Ascending aorta (tissue), 2 donors: ENCODE measurements at regions of chr17 and their contacts with region 1.

Region 1: DNA sequence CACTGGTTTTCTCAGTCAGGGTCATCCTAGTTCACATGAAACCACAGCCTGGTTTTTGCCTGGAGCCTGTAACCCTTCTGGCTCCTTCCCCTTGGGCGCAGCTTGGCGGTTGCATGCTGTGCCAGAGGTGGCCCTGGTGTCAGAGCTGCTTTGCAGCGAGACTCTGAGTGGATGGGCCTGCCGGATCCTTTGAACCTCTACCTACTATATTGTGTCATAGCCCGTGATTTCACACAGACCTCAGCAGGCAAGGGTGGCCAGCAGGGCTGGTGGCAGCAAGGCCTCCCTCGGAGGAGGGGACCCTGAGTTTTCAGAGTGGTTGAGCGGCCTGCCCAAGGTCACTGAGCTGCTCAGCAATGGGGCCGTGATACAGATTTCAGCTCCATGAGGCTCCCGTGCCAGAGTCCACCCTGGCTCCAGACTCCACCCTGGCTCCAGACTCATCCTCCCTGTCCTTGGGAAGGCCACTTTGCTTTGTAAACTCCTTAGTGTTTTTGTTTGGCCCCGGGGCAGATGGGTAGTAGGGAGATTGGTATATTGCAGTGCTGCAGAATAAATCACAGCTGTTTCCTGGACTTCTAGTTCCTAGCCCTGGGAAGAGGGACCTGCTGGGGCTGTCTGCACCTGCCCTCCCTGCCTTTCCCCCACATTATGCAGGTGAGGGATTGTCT is 9.7 kb downstream of the MPRIP start:
- DNase-seq: peak in 1 of 2 donors; percentile 57
- H3K4me3 ChIP-seq: no peak overlapping the region
- H3K27ac ChIP-seq: peak overlapping the region; percentile 26 to 29
- H3K4me1 ChIP-seq: peaks cover 16 to 48% of the 10 kb centered on the region in 2 donors
- H3K27me3 ChIP-seq: no peaks in the 10 kb centered on the region
- CTCF ChIP-seq: no peak

Region 2: DNA sequence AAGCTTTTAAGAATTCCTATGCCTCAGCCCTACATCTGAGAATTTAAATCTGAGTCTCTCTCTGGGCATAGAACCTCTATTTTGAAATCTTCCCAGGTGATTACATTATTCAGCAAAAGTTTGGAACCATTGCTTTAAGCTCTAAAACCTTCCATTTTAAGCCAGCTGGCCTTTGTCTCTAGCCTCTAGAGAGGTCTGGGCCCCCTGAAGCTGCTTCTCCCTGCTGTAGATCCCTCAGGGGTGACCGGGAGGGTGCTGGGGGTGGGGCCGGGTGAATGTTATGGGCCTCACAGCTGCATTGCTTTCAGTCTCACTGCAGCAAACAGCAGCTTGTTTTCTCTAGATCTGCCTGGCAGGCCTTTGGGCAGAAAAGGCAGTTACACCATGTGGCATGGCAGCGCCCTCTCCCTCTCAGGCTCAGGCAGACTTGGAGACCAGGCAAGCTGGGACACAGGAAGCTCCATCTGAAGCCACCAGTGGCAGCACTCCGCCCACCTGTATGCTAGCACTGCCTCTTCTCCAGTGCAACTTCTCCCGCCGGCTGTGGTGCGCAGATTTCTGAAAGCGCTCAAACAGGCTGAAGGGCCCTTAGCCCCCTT is 56.6 kb after region 1 on chr17:
- intact Hi-C with region 1: loop called (anchors 10 kb)
- DNase-seq: no peak
- H3K4me3 ChIP-seq: no peak overlapping the region
- H3K27ac ChIP-seq: peak overlapping the region; percentile 30 to 59
- H3K4me1 ChIP-seq: peaks cover 11 to 33% of the 10 kb centered on the region in 2 donors
- H3K27me3 ChIP-seq: no peaks in the 10 kb centered on the region
- CTCF ChIP-seq: peak in 2 of 3 experiments; percentile 10 to 37